Naive thymus-derived CD4-positive, alpha-beta T cell (primary cell): ENCODE measurements at regions of chr19 and their contacts with region 1.

Region 1: DNA sequence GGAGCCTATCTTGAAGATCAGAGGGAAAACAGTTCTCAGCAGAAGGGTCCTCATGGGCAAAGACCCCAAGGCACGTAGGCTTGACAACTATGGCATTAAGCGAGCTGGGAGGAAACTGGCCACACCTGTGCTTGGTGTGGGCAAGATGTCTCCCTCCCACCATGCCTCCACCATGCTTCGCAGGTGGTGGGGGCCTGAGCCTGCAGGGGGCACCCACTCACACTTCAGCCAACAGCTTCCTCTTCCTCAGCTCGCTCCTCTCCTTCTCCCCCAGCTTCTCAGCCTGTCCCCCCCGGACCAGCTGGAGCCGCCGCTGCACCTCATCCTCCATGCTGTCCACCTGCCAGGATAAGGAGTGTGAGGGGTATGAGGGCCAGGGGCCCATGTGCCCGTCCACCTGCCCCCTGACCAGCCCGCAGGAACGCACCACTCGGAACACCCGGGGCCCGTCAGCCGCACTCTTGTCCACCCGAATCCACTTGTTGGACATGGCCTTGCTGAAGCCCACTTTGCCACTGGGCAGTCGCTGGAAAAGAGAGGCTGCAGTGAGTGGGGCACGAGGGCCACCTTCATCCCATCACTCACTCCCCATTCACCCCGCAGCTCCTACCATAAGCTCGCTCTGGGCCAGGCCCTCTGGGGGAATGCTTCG is 3.4 kb downstream of the FARSA start:
- DNase-seq: no peak
- ATAC-seq: no peak
- H3K4me3 ChIP-seq: no peak overlapping the region
- H3K4me3 Mint-ChIP-seq: no peak overlapping the region
- H3K27ac ChIP-seq: no peak overlapping the region
- H3K27ac Mint-ChIP-seq: no peak overlapping the region
- H3K4me1 ChIP-seq: peaks cover 14% of the 10 kb centered on the region in 2 donors
- H3K4me1 Mint-ChIP-seq: peaks cover 16 to 34% (median 26%) of the 10 kb centered on the region in 7 donors
- H3K27me3 ChIP-seq: no peaks in the 10 kb centered on the region
- H3K27me3 Mint-ChIP-seq: no peaks in the 10 kb centered on the region

Region 2: DNA sequence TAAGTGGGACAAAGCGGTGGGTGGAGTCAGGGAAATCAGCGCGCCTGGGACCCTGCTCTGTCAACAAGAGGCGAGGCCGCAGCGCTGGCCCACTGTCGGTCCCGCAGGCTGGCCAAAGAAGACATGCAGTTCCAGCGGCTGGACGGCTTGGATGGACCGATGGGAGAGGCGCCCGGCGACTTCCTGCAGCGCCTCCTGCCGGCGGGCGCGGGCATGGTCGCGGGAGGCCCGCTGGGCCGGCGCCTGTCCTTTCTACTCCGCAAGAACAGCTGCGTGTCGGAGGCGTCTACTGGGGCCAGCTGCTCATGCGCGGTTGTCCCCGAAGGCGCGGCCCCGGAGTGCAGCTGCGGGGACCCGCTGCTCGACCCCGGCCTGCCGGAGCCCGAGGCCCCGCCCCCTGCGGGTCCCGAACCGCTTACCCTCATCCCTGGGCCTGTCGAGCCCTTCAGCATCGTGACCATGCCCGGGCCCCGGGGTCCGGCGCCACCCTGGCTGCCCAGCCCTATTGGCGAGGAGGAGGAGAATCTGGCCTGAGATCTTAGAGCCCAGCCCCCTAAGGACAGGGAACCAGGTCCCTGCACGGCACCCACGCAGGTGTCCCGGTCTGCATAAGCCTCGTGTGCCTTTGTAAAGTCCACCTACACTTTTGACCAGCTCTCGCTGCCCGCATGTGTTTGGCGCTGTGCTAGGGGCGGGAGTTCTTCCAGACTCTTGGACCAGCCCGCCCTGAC is 172.4 kb before region 1 on chr19:
- CTCF ChIA-PET with region 1: no interaction called
- POLR2A ChIA-PET with region 1: no interaction called
- intact Hi-C with region 1: no loop called
- DNase-seq: peak in 8 of 9 donors; percentile 40 to 84 (median 57)
- ATAC-seq: peak; percentile 87
- H3K4me3 ChIP-seq: peak overlapping the region; percentile 27
- H3K4me3 Mint-ChIP-seq: peak overlapping the region in 8 of 10 donors; percentile 13 to 64 (median 46)
- H3K27ac ChIP-seq: no peak overlapping the region
- H3K27ac Mint-ChIP-seq: no peak overlapping the region
- H3K4me1 ChIP-seq: peaks cover 0 to 7% of the 10 kb centered on the region in 2 donors
- H3K4me1 Mint-ChIP-seq: peaks cover 0 to 10% (median 8%) of the 10 kb centered on the region in 7 donors
- H3K27me3 ChIP-seq: no peaks in the 10 kb centered on the region
- H3K27me3 Mint-ChIP-seq: peaks cover 10 to 20% (median 11%) of the 10 kb centered on the region in 5 donors

Region 3: GRCh38 chr19:12825254-12826131 is 104.6 kb before region 1 on chr19:
- CTCF ChIA-PET with region 1: no interaction called
- POLR2A ChIA-PET with region 1: no interaction called
- intact Hi-C with region 1: no loop called
- DNase-seq: no peak
- ATAC-seq: peak; percentile 45
- H3K4me3 ChIP-seq: no peak overlapping the region
- H3K4me3 Mint-ChIP-seq: peak overlapping the region in 6 of 10 donors; percentile 8 to 60 (median 44)
- H3K27ac ChIP-seq: no peak overlapping the region
- H3K27ac Mint-ChIP-seq: peak overlapping the region in 1 of 9 donors; percentile 25
- H3K4me1 ChIP-seq: no peaks in the 10 kb centered on the region
- H3K4me1 Mint-ChIP-seq: peaks cover 4 to 13% (median 9%) of the 10 kb centered on the region in 7 donors
- H3K27me3 ChIP-seq: peaks cover 0 to 18% of the 10 kb centered on the region in 2 donors
- H3K27me3 Mint-ChIP-seq: peaks cover 39 to 57% (median 50%) of the 10 kb centered on the region in 5 donors

Region 4: GRCh38 chr19:12913011-12913561 is 17.0 kb before region 1 on chr19:
- CTCF ChIA-PET with region 1: interaction called, 5 read pairs
- POLR2A ChIA-PET with region 1: interaction called, 33 read pairs
- intact Hi-C with region 1: loop called in 1 of 2 experiments (anchors 2 kb)
- DNase-seq: no peak
- ATAC-seq: no peak
- H3K4me3 ChIP-seq: no peak overlapping the region
- H3K4me3 Mint-ChIP-seq: peak overlapping the region in 6 of 10 donors; percentile 23 to 88 (median 52)
- H3K27ac ChIP-seq: peak overlapping the region; percentile 54
- H3K27ac Mint-ChIP-seq: peak overlapping the region; percentile 81 to 99 (median 97)
- H3K4me1 ChIP-seq: peaks cover 12 to 23% of the 10 kb centered on the region in 2 donors
- H3K4me1 Mint-ChIP-seq: peaks cover 11 to 32% (median 25%) of the 10 kb centered on the region in 7 donors
- H3K27me3 ChIP-seq: no peaks in the 10 kb centered on the region
- H3K27me3 Mint-ChIP-seq: no peaks in the 10 kb centered on the region

Region 5: GRCh38 chr19:12974301-12975220 is 44.4 kb after region 1 on chr19:
- CTCF ChIA-PET with region 1: no interaction called
- POLR2A ChIA-PET with region 1: no interaction called
- intact Hi-C with region 1: no loop called
- DNase-seq: no peak
- ATAC-seq: no peak
- H3K4me3 ChIP-seq: no peak overlapping the region
- H3K4me3 Mint-ChIP-seq: no peak overlapping the region
- H3K27ac ChIP-seq: no peak overlapping the region
- H3K27ac Mint-ChIP-seq: no peak overlapping the region
- H3K4me1 ChIP-seq: peaks cover 0 to 3% of the 10 kb centered on the region in 2 donors
- H3K4me1 Mint-ChIP-seq: peaks cover 2 to 7% (median 5%) of the 10 kb centered on the region in 7 donors
- H3K27me3 ChIP-seq: no peaks in the 10 kb centered on the region
- H3K27me3 Mint-ChIP-seq: peaks cover 7 to 17% (median 16%) of the 10 kb centered on the region in 5 donors

Region 6: DNA sequence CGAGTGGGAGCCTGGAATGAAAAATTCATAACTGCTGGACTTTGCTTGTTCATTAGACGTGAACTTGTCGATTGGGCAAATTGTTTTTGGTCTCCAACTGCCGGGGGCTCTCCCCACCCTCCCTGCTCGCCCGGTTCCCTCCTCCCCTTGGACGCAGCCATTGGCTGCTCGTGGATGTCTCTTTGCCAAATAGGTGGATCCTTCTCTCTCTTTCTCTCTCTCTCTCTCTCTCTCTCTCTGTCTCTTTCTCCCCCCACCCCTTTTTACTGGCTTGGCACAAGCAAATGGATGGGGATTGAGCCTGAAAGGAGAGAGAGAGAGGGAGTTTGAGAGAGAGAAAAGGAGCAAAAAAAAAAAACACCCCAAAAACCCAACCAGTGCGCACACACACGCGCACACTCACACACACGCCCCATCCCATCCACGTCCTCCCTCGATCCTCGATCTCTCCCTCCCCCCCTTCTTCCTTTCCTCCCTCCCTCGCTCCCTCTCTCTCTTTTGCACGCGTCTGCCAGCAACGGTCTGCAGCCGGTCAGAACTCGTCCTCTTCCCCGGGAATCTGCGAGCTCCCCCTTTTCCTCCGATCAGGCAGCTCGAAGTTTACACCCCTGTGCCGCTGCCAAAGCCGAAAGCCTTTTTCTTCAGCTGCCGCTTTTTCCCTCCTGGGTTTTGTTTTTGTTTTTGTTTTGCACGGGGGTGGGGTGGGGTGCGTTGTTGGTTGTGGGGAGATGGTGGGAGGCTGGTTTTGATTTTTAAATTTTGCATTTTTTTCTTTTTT is 92.9 kb after region 1 on chr19:
- CTCF ChIA-PET with region 1: no interaction called
- POLR2A ChIA-PET with region 1: no interaction called
- intact Hi-C with region 1: no loop called
- DNase-seq: no peak
- ATAC-seq: no peak
- H3K4me3 ChIP-seq: peak overlapping the region; percentile 41
- H3K4me3 Mint-ChIP-seq: peak overlapping the region; percentile 38 to 87 (median 68)
- H3K27ac ChIP-seq: no peak overlapping the region
- H3K27ac Mint-ChIP-seq: peak overlapping the region in 2 of 9 donors; percentile 48 to 60
- H3K4me1 ChIP-seq: peaks cover 4 to 11% of the 10 kb centered on the region in 2 donors
- H3K4me1 Mint-ChIP-seq: peaks cover 6 to 35% (median 22%) of the 10 kb centered on the region in 7 donors
- H3K27me3 ChIP-seq: peaks cover 3 to 5% of the 10 kb centered on the region in 2 donors
- H3K27me3 Mint-ChIP-seq: peaks cover 27 to 63% (median 41%) of the 10 kb centered on the region in 5 donors